Right lobe of liver (tissue), 6 donors: ENCODE measurements at regions of chr2 and their contacts with region 1.

Region 1: GRCh38 chr2:20661067-20661980 is 5.6 kb upstream of the GDF7 start:
- DNase-seq: peak; percentile 54 to 79 (median 77)
- ATAC-seq: peak; percentile 82 to 85 (median 85)
- H3K4me3 ChIP-seq: no peak overlapping the region
- H3K27ac ChIP-seq: no peak overlapping the region
- H3K4me1 ChIP-seq: peaks cover 0 to 9% (median 0%) of the 10 kb centered on the region in 4 donors
- H3K27me3 ChIP-seq: no peaks in the 10 kb centered on the region
- CTCF ChIP-seq: peak; percentile 94 to 97 (median 96)
- POLR2A ChIP-seq: no peak

Region 2: GRCh38 chr2:20755132-20755800 is 93.9 kb after region 1 on chr2:
- intact Hi-C with region 1: loop called in 1 of 2 experiments (anchors 10 kb)
- DNase-seq: no peak
- ATAC-seq: peak in 3 of 4 donors; percentile 29 to 38 (median 38)
- H3K4me3 ChIP-seq: no peak overlapping the region
- H3K27ac ChIP-seq: no peak overlapping the region
- H3K4me1 ChIP-seq: peaks cover 0 to 7% (median 2%) of the 10 kb centered on the region in 4 donors
- H3K27me3 ChIP-seq: no peaks in the 10 kb centered on the region
- CTCF ChIP-seq: peak; percentile 23 to 26 (median 25)
- POLR2A ChIP-seq: no peak

Region 3: DNA sequence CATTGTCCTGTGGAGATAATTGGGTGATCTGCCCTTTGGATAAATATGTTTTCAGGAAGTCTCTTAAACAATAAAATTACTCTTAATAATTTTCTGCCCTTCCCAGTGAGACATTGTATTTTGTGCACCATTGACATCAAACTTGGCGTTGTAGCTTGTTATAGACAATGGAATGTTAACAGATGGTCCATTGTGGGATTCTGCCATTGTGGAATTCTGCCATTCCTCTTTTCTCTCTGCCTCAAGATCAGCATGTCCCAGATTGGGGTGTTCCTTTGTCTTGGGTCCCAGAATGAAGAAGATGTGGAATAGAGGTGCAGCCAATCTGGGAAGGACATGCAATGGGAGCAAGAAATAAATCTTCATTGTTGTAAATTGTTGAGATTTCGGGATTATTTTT is 176.7 kb after region 1 on chr2:
- intact Hi-C with region 1: no loop called
- DNase-seq: no peak
- ATAC-seq: no peak
- H3K4me3 ChIP-seq: no peak overlapping the region
- H3K27ac ChIP-seq: no peak overlapping the region
- H3K4me1 ChIP-seq: no peaks in the 10 kb centered on the region
- H3K27me3 ChIP-seq: no peaks in the 10 kb centered on the region
- CTCF ChIP-seq: no peak
- POLR2A ChIP-seq: no peak

Region 4: GRCh38 chr2:20955277-20956026 is 294.1 kb after region 1 on chr2:
- intact Hi-C with region 1: loop called (anchors 5 to 10 kb)
- DNase-seq: no peak
- ATAC-seq: no peak
- H3K4me3 ChIP-seq: no peak overlapping the region
- H3K27ac ChIP-seq: no peak overlapping the region
- H3K4me1 ChIP-seq: no peaks in the 10 kb centered on the region
- H3K27me3 ChIP-seq: no peaks in the 10 kb centered on the region
- CTCF ChIP-seq: no peak
- POLR2A ChIP-seq: no peak

Region 5: DNA sequence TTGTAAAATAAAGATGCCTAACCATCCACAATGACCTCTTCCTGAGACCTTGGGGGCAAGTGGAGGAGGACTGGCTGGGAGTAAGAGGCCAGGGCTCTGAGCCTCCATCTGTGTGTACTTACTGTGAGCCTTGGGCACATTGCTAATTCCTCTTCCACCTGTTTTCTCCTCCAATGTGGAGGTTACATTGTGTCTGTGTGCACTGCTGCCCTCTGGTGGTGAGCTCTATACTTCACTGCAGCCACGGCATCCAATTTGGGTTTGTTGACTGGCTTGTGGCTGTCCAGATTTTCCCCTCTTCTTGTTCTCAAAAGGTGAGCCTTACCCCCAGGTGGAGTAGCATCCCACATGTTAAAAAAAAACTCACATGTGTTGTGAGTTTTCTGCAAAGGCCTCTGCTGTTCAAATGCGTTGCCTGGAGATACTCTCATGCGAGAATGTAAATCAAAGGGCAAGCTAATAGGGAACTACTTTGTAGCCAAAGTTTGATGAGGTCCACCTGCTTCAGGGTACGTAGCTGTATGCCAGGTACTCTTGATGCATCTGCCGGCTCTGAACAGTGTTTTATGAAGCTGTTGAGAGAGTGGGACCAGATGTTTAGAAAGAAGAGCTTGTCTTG is 301.7 kb after region 1 on chr2:
- intact Hi-C with region 1: loop called (anchors 5 to 10 kb)
- DNase-seq: peak; percentile 65 to 76 (median 67)
- ATAC-seq: peak; percentile 91 to 97 (median 94)
- H3K4me3 ChIP-seq: no peak overlapping the region
- H3K27ac ChIP-seq: no peak overlapping the region
- H3K4me1 ChIP-seq: peaks cover 0 to 3% (median 0%) of the 10 kb centered on the region in 4 donors
- H3K27me3 ChIP-seq: no peaks in the 10 kb centered on the region
- CTCF ChIP-seq: peak; percentile 83 to 91 (median 86)
- POLR2A ChIP-seq: no peak